Endothelial cell of umbilical vein (primary cell): ENCODE measurements at regions of chr17 and their contacts with region 1.

Region 1: GRCh38 chr17:79789534-79790353 is 7.1 kb downstream of the CBX8 start:
- DNase-seq: no peak
- H3K4me3 ChIP-seq: no peak overlapping the region
- H3K27ac ChIP-seq: no peak overlapping the region
- H3K4me1 ChIP-seq: peaks cover 6% of the 10 kb centered on the region
- H3K27me3 ChIP-seq: peaks cover 40 to 57% of the 10 kb centered on the region in 2 experiments
- CTCF ChIP-seq: peak; percentile 71 to 84
- POLR2A ChIP-seq: no peak

Region 2: GRCh38 chr17:78933959-78934568 is 855.7 kb before region 1 on chr17:
- CTCF ChIA-PET with region 1: no interaction called
- POLR2A ChIA-PET with region 1: no interaction called
- dilution Hi-C with region 1: no loop called
- intact Hi-C with region 1: no loop called
- DNase-seq: peak; percentile 96
- H3K4me3 ChIP-seq: peak overlapping the region in 2 of 3 experiments; percentile 16 to 25
- H3K27ac ChIP-seq: peak overlapping the region; percentile 93
- H3K4me1 ChIP-seq: peaks cover 30% of the 10 kb centered on the region
- H3K27me3 ChIP-seq: no peaks in the 10 kb centered on the region
- CTCF ChIP-seq: no peak
- POLR2A ChIP-seq: peak; percentile 55

Region 3: GRCh38 chr17:79741751-79742588 is 47.8 kb before region 1 on chr17:
- CTCF ChIA-PET with region 1: interaction called, 20 read pairs
- POLR2A ChIA-PET with region 1: no interaction called
- dilution Hi-C with region 1: no loop called
- intact Hi-C with region 1: no loop called
- DNase-seq: peak; percentile 62
- H3K4me3 ChIP-seq: no peak overlapping the region
- H3K27ac ChIP-seq: no peak overlapping the region
- H3K4me1 ChIP-seq: no peaks in the 10 kb centered on the region
- H3K27me3 ChIP-seq: peaks cover 14 to 29% of the 10 kb centered on the region in 2 experiments
- CTCF ChIP-seq: peak; percentile 88 to 93
- POLR2A ChIP-seq: no peak

Region 4: GRCh38 chr17:79810130-79811010 is 20.6 kb after region 1 on chr17:
- CTCF ChIA-PET with region 1: interaction called, 16 read pairs
- POLR2A ChIA-PET with region 1: no interaction called
- dilution Hi-C with region 1: no loop called
- intact Hi-C with region 1: no loop called
- DNase-seq: peak; percentile 64
- H3K4me3 ChIP-seq: no peak overlapping the region
- H3K27ac ChIP-seq: no peak overlapping the region
- H3K4me1 ChIP-seq: peaks cover 8% of the 10 kb centered on the region
- H3K27me3 ChIP-seq: peaks cover 69 to 82% of the 10 kb centered on the region in 2 experiments
- CTCF ChIP-seq: no peak
- POLR2A ChIP-seq: no peak

Region 5: DNA sequence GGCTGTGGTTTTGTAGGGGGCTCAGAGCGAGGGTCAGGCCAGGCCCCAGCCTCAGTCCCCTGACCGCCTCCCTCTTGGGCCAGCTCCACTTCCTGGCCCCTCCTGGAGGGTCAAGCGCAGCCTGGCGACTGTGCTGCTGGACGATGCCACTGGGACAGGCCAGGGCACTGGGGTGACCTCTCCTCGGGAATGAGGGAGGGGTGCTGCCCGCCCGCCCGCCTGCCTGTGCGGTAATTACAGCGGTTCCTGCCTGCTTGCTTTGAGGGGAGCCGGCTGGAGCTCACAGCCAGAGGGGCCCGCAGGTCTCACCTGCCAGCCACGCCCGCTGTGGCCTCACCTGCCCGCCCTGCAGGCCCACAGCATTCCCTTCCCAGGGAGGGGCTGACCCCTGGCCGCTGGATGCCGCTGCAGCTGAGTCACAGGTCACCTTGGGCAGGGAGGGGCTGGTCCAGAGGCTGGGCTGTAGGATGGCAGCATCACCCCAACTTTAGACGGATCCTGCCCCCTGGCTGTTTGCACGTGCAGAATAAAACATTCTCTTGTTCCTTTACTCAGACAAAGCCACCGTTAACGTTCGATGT is 126.2 kb after region 1 on chr17:
- CTCF ChIA-PET with region 1: interaction called, 10 read pairs
- POLR2A ChIA-PET with region 1: no interaction called
- dilution Hi-C with region 1: no loop called
- intact Hi-C with region 1: no loop called
- DNase-seq: no peak
- H3K4me3 ChIP-seq: no peak overlapping the region
- H3K27ac ChIP-seq: no peak overlapping the region
- H3K4me1 ChIP-seq: peaks cover 6% of the 10 kb centered on the region
- H3K27me3 ChIP-seq: no peaks in the 10 kb centered on the region
- CTCF ChIP-seq: no peak
- POLR2A ChIP-seq: no peak

Region 6: DNA sequence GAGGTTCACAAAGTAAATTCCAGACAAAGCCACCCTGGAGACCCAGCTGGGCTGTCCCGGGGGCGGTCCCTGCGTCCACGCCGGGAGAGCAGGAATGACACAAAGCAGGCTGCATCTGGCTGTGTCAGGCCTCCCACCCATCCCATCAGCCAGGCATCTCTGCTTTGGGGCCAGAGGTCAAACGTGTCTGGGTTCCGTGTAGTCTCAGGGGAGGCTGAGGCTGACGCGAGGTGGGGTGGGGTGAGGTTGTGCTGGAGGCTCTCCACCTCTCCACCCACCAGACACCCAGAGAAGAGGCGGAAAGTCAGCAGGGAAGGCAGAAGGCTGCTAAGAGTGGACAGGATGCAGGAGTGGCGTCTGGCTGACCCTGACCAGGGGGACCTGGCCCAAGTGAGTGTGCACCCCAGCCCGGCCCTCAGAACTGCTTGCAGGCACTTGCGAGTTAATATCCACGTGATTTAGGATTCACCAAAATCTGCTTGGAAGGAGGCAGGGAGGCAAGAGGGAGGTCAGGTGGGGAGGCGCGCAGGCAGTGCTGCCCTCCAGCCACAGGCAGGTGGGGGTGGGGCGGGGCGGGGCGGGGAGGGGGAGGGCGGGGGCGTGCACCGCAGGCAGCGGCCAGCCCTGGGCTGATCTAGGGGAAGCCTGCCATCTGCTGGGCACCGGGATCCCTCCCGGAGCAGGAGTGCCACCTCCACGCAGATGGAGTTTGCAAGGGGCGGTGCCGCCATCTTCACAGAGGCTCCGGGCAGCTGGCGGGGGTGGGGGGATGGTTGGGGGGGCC is 201.6 kb after region 1 on chr17:
- CTCF ChIA-PET with region 1: interaction called, 13 read pairs
- POLR2A ChIA-PET with region 1: no interaction called
- dilution Hi-C with region 1: no loop called
- intact Hi-C with region 1: loop called (anchors 1 kb)
- DNase-seq: peak; percentile 70
- H3K4me3 ChIP-seq: peak overlapping the region in 1 of 3 experiments; percentile 14
- H3K27ac ChIP-seq: no peak overlapping the region
- H3K4me1 ChIP-seq: peaks cover 20% of the 10 kb centered on the region
- H3K27me3 ChIP-seq: no peaks in the 10 kb centered on the region
- CTCF ChIP-seq: peak; percentile 24 to 79
- POLR2A ChIP-seq: no peak